Heart right ventricle (tissue), 16 donors: ENCODE measurements at regions of chr17 and their contacts with region 1.

Region 1: GRCh38 chr17:33520426-33521330 is 227.6 kb upstream of the ASIC2 start:
- DNase-seq: peak; percentile 35 to 57
- ATAC-seq: peak in 5 of 8 donors; percentile 36 to 66 (median 58)
- H3K4me3 ChIP-seq: no peak overlapping the region
- H3K27ac ChIP-seq: no peak overlapping the region
- H3K4me1 ChIP-seq: no peaks in the 10 kb centered on the region
- H3K27me3 ChIP-seq: peaks cover 0 to 5% (median 0%) of the 10 kb centered on the region in 7 donors
- CTCF ChIP-seq: peak; percentile 43 to 82 (median 75)

Region 2: GRCh38 chr17:33049781-33050414 is 470.8 kb before region 1 on chr17:
- intact Hi-C with region 1: loop called in 1 of 10 experiments (anchors 10 kb)
- DNase-seq: peak in 1 of 2 donors; percentile 50
- ATAC-seq: peak in 1 of 8 donors; percentile 56
- H3K4me3 ChIP-seq: no peak overlapping the region
- H3K27ac ChIP-seq: no peak overlapping the region
- H3K4me1 ChIP-seq: peaks cover 0 to 5% (median 0%) of the 10 kb centered on the region in 9 donors
- H3K27me3 ChIP-seq: peaks cover 0 to 10% (median 0%) of the 10 kb centered on the region in 7 donors
- CTCF ChIP-seq: peak; percentile 59 to 91 (median 79)

Region 3: GRCh38 chr17:33469911-33470310 is 50.8 kb before region 1 on chr17:
- intact Hi-C with region 1: no loop called
- DNase-seq: peak in 1 of 2 donors; percentile 8
- ATAC-seq: peak in 6 of 8 donors; percentile 34 to 71 (median 47)
- H3K4me3 ChIP-seq: no peak overlapping the region
- H3K27ac ChIP-seq: no peak overlapping the region
- H3K4me1 ChIP-seq: peaks cover 0 to 6% (median 0%) of the 10 kb centered on the region in 9 donors
- H3K27me3 ChIP-seq: peaks cover 0 to 6% (median 0%) of the 10 kb centered on the region in 7 donors
- CTCF ChIP-seq: no peak

Region 4: DNA sequence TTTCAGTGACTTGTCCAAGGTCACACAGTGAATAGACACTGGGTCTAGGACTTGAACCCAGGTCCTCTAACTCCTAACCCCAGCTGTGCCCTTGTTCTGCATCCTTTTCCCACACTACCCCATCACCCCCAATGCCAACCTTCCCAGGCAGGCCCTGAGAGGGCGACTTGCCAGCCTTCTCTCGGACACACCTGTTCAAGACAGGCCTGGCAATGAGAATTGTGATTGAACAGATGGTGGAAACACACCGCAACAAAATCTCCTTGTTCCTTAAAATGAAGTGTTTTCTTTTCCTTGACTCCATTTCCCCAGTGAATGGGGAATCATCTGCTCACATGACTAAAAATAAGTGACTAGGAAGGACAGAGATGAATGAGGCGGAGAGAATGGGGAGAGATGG is 38.0 kb before region 1 on chr17:
- intact Hi-C with region 1: no loop called
- DNase-seq: no peak
- ATAC-seq: no peak
- H3K4me3 ChIP-seq: no peak overlapping the region
- H3K27ac ChIP-seq: no peak overlapping the region
- H3K4me1 ChIP-seq: no peaks in the 10 kb centered on the region
- H3K27me3 ChIP-seq: peaks cover 0 to 13% (median 0%) of the 10 kb centered on the region in 7 donors
- CTCF ChIP-seq: no peak

Region 5: GRCh38 chr17:33545124-33545523 is 24.4 kb after region 1 on chr17:
- intact Hi-C with region 1: no loop called
- DNase-seq: no peak
- ATAC-seq: no peak
- H3K4me3 ChIP-seq: no peak overlapping the region
- H3K27ac ChIP-seq: no peak overlapping the region
- H3K4me1 ChIP-seq: no peaks in the 10 kb centered on the region
- H3K27me3 ChIP-seq: peaks cover 0 to 31% (median 12%) of the 10 kb centered on the region in 7 donors
- CTCF ChIP-seq: no peak

Region 6: GRCh38 chr17:33560165-33560564 is 39.5 kb after region 1 on chr17:
- intact Hi-C with region 1: no loop called
- DNase-seq: no peak
- ATAC-seq: peak in 1 of 8 donors; percentile 72
- H3K4me3 ChIP-seq: no peak overlapping the region
- H3K27ac ChIP-seq: peak overlapping the region in 1 of 10 donors; percentile 61
- H3K4me1 ChIP-seq: peaks cover 0 to 28% (median 5%) of the 10 kb centered on the region in 9 donors
- H3K27me3 ChIP-seq: peaks cover 0 to 11% (median 0%) of the 10 kb centered on the region in 7 donors
- CTCF ChIP-seq: no peak

Region 7: GRCh38 chr17:33647956-33648355 is 127.3 kb after region 1 on chr17:
- intact Hi-C with region 1: loop called in 1 of 10 experiments (anchors 10 kb)
- DNase-seq: no peak
- ATAC-seq: peak in 1 of 8 donors; percentile 41
- H3K4me3 ChIP-seq: no peak overlapping the region
- H3K27ac ChIP-seq: no peak overlapping the region
- H3K4me1 ChIP-seq: peaks cover 0 to 12% (median 3%) of the 10 kb centered on the region in 9 donors
- H3K27me3 ChIP-seq: peaks cover 0 to 36% (median 4%) of the 10 kb centered on the region in 7 donors
- CTCF ChIP-seq: peak in 8 of 9 donors; percentile 20 to 54 (median 45)